ENCODE measurements at regions of chr16 and their contacts with region 1.

Region 1: GRCh38 chr16:69709456-69710084 is 16.8 kb downstream of the NQO1 start:
- DNase-seq: no peak

Region 2: GRCh38 chr16:69520800-69521602 is 188.6 kb before region 1 on chr16:
- intact Hi-C with region 1: no loop called
- DNase-seq: no peak

Region 3: GRCh38 chr16:69754469-69755310 is 45.1 kb after region 1 on chr16 and contains the start of gene NOB1:
- intact Hi-C with region 1: loop called (anchors 2 kb)
- DNase-seq: peak; percentile 99
- total RNA-seq, gene NOB1: 16.1 TPM